Astrocyte of the cerebellum (primary cell): ENCODE measurements at regions of chr11 and their contacts with region 1.

Region 1: GRCh38 chr11:64531906-64532312 is 59.1 kb upstream of the SLC22A12 start:
- DNase-seq: no peak
- H3K4me3 ChIP-seq: no peak overlapping the region
- CTCF ChIP-seq: no peak

Region 2: GRCh38 chr11:64428693-64429092 is 103.2 kb before region 1 on chr11:
- in situ Hi-C with region 1: loop called (anchors 5 kb)
- DNase-seq: no peak
- H3K4me3 ChIP-seq: no peak overlapping the region
- CTCF ChIP-seq: no peak